Ovary (tissue), 10 donors: ENCODE measurements at regions of chr1 and their contacts with region 1.

Region 1: GRCh38 chr1:116498789-116499628 is 71.8 kb downstream of the CD58 start:
- DNase-seq: peak in 4 of 5 donors; percentile 13 to 45 (median 30)
- H3K4me3 ChIP-seq: no peak overlapping the region
- H3K27ac ChIP-seq: no peak overlapping the region
- H3K4me1 ChIP-seq: no peaks in the 10 kb centered on the region
- H3K27me3 ChIP-seq: no peaks in the 10 kb centered on the region
- CTCF ChIP-seq: peak; percentile 32 to 58 (median 48)
- EP300 ChIP-seq: no peak
- POLR2A ChIP-seq: no peak

Region 2: GRCh38 chr1:116133696-116134650 is 365.0 kb before region 1 on chr1:
- intact Hi-C with region 1: loop called in 1 of 4 experiments (anchors 5 kb)
- DNase-seq: no peak
- H3K4me3 ChIP-seq: no peak overlapping the region
- H3K27ac ChIP-seq: no peak overlapping the region
- H3K4me1 ChIP-seq: no peaks in the 10 kb centered on the region
- H3K27me3 ChIP-seq: no peaks in the 10 kb centered on the region
- CTCF ChIP-seq: no peak
- EP300 ChIP-seq: no peak
- POLR2A ChIP-seq: no peak